ENCODE measurements at regions of chr11 and their contacts with region 1.

Region 1: GRCh38 chr11:134068829-134069425 is at the start of gene JAM3:
- DNase-seq: peak; percentile 89 to 99 (median 95)
- ATAC-seq: peak; percentile 90 to 95 (median 93)
- H3K4me3 ChIP-seq: peak within 1 kb of the TSS; percentile 40 to 47
- H3K4me3 Mint-ChIP-seq: peak within 1 kb of the TSS; percentile 86 to 91 (median 89)
- H3K27ac ChIP-seq: no peak within 1 kb of the TSS
- H3K27ac Mint-ChIP-seq: peak within 1 kb of the TSS; percentile 87 to 90
- H3K4me1 ChIP-seq: peaks cover 0 to 12% of the 10 kb centered on the region in 2 experiments
- H3K4me1 Mint-ChIP-seq: peaks cover 13 to 20% (median 15%) of the 10 kb centered on the region in 3 donors
- H3K27me3 ChIP-seq: peaks cover 0 to 15% of the 10 kb centered on the region in 2 experiments
- H3K27me3 Mint-ChIP-seq: peaks cover 0 to 7% of the 10 kb centered on the region in 2 donors
- total RNA-seq, gene JAM3: 6.6 to 10.7 (median 8.2) TPM

Region 2: DNA sequence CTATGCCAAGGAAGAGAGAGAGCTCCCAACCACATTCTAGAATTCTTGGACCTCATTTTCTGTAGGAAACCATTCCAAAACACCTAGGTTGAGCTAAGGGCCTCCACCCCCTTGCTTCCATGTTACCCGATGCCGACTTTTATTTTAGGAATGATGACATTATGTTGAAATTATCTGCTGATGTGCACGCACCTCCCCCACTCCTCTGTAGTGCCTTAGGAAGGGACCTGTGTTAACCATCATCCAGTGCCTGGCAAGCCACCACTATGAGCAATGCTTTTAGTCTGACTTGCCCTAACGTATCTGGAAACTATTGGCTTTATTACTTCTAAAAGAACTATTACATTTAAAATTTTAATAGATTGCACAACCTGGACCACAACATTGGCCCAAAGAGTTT is 112.8 kb after region 1 on chr11:
- CTCF ChIA-PET with region 1: interaction called in 1 of 2 experiments, 10 read pairs
- POLR2A ChIA-PET with region 1: interaction called in 1 of 2 experiments, 4 read pairs
- DNase-seq: no peak
- ATAC-seq: no peak
- H3K4me3 ChIP-seq: no peak overlapping the region
- H3K4me3 Mint-ChIP-seq: no peak overlapping the region
- H3K27ac ChIP-seq: no peak overlapping the region
- H3K27ac Mint-ChIP-seq: no peak overlapping the region
- H3K4me1 ChIP-seq: no peaks in the 10 kb centered on the region
- H3K4me1 Mint-ChIP-seq: no peaks in the 10 kb centered on the region
- H3K27me3 ChIP-seq: no peaks in the 10 kb centered on the region
- H3K27me3 Mint-ChIP-seq: no peaks in the 10 kb centered on the region

Region 3: GRCh38 chr11:134498326-134499139 is 429.6 kb after region 1 on chr11:
- CTCF ChIA-PET with region 1: no interaction called
- POLR2A ChIA-PET with region 1: no interaction called
- DNase-seq: no peak
- ATAC-seq: no peak
- H3K4me3 ChIP-seq: no peak overlapping the region
- H3K4me3 Mint-ChIP-seq: no peak overlapping the region
- H3K27ac ChIP-seq: no peak overlapping the region
- H3K27ac Mint-ChIP-seq: no peak overlapping the region
- H3K4me1 ChIP-seq: no peaks in the 10 kb centered on the region
- H3K4me1 Mint-ChIP-seq: no peaks in the 10 kb centered on the region
- H3K27me3 ChIP-seq: peaks cover 0 to 30% of the 10 kb centered on the region in 2 experiments
- H3K27me3 Mint-ChIP-seq: peaks cover 22 to 27% of the 10 kb centered on the region in 2 donors